Naive thymus-derived CD4-positive, alpha-beta T cell (primary cell): ENCODE measurements at regions of chr16 and their contacts with region 1.

Region 1: GRCh38 chr16:138049-138417 is 440 bp downstream of the NPRL3 start:
- DNase-seq: peak in 7 of 9 donors; percentile 10 to 55 (median 23)
- ATAC-seq: peak; percentile 24
- H3K4me3 ChIP-seq: peak overlapping the region; percentile 58
- H3K4me3 Mint-ChIP-seq: peak overlapping the region; percentile 74 to 90 (median 84)
- H3K27ac ChIP-seq: peak overlapping the region; percentile 68
- H3K27ac Mint-ChIP-seq: peak overlapping the region in 7 of 9 donors; percentile 11 to 94 (median 75)
- H3K4me1 ChIP-seq: peaks cover 6% of the 10 kb centered on the region in 2 donors
- H3K4me1 Mint-ChIP-seq: peaks cover 9 to 47% (median 26%) of the 10 kb centered on the region in 7 donors
- H3K27me3 ChIP-seq: no peaks in the 10 kb centered on the region
- H3K27me3 Mint-ChIP-seq: peaks cover 0 to 6% (median 0%) of the 10 kb centered on the region in 5 donors

Region 2: GRCh38 chr16:53346-54236 is 84.4 kb before region 1 on chr16 and contains the starts of genes POLR3K and SNRNP25:
- CTCF ChIA-PET with region 1: no interaction called
- POLR2A ChIA-PET with region 1: no interaction called
- intact Hi-C with region 1: loop called in 1 of 2 experiments (anchors 1 kb)
- DNase-seq: peak; percentile 90 to 98 (median 96)
- ATAC-seq: peak; percentile 98
- H3K4me3 ChIP-seq: peak within 1 kb of the TSS; percentile 96
- H3K4me3 Mint-ChIP-seq: peak within 1 kb of the TSS; percentile 89 to 100 (median 98)
- H3K27ac ChIP-seq: peak within 1 kb of the TSS; percentile 73
- H3K27ac Mint-ChIP-seq: peak within 1 kb of the TSS; percentile 66 to 95 (median 92)
- H3K4me1 ChIP-seq: peaks cover 9 to 11% of the 10 kb centered on the region in 2 donors
- H3K4me1 Mint-ChIP-seq: peaks cover 22 to 45% (median 36%) of the 10 kb centered on the region in 7 donors
- H3K27me3 ChIP-seq: no peaks in the 10 kb centered on the region
- H3K27me3 Mint-ChIP-seq: no peaks in the 10 kb centered on the region
- total RNA-seq, gene POLR3K: 8.5 to 45.4 (median 18.9) TPM
- total RNA-seq, gene SNRNP25: 9.8 to 57.4 (median 11.7) TPM

Region 3: GRCh38 chr16:200388-200787 is 62.4 kb after region 1 on chr16:
- CTCF ChIA-PET with region 1: no interaction called
- POLR2A ChIA-PET with region 1: no interaction called
- intact Hi-C with region 1: no loop called
- DNase-seq: no peak
- ATAC-seq: no peak
- H3K4me3 ChIP-seq: no peak overlapping the region
- H3K4me3 Mint-ChIP-seq: no peak overlapping the region
- H3K27ac ChIP-seq: no peak overlapping the region
- H3K27ac Mint-ChIP-seq: no peak overlapping the region
- H3K4me1 ChIP-seq: no peaks in the 10 kb centered on the region
- H3K4me1 Mint-ChIP-seq: no peaks in the 10 kb centered on the region
- H3K27me3 ChIP-seq: no peaks in the 10 kb centered on the region
- H3K27me3 Mint-ChIP-seq: no peaks in the 10 kb centered on the region

Region 4: DNA sequence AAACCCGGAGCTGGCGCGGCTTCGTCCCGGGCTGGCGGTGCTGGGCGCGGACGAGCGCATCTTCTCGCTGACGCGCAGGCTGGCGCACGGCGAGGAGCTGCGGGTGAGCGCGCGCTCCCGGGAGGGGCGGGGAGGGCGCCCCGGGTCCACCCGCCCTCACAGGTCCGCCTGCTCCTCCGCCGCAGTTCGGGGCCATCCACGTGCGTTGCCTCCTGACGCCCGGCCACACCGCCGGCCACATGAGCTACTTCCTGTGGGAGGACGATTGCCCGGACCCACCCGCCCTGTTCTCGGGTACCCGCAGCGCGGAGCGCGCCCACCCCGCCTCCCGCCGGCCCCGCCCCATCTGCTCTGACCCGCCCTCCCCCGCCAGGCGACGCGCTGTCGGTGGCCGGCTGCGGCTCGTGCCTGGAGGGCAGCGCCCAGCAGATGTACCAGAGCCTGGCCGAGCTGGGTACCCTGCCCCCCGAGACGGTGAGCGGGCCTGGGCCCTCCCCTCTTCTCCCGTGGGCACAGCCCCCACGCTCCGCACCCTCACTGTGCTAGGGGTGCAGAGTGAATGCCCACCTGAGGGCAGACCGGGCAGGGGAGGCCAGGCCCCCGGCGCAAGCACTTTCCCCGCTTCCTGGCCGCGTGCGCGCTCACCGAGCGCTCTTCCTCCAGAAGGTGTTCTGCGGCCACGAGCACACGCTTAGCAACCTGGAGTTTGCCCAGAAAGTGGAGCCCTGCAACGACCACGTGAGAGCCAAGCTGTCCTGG is 590.3 kb after region 1 on chr16:
- CTCF ChIA-PET with region 1: no interaction called
- POLR2A ChIA-PET with region 1: no interaction called
- intact Hi-C with region 1: loop called in 1 of 2 experiments (anchors 5 kb)
- DNase-seq: peak in 7 of 9 donors; percentile 46 to 64 (median 55)
- ATAC-seq: peak; percentile 85
- H3K4me3 ChIP-seq: peak overlapping the region; percentile 39
- H3K4me3 Mint-ChIP-seq: peak overlapping the region in 5 of 10 donors; percentile 25 to 87 (median 42)
- H3K27ac ChIP-seq: peak overlapping the region; percentile 21
- H3K27ac Mint-ChIP-seq: no peak overlapping the region
- H3K4me1 ChIP-seq: peaks cover 0 to 12% of the 10 kb centered on the region in 2 donors
- H3K4me1 Mint-ChIP-seq: no peaks in the 10 kb centered on the region
- H3K27me3 ChIP-seq: no peaks in the 10 kb centered on the region
- H3K27me3 Mint-ChIP-seq: peaks cover 0 to 6% (median 0%) of the 10 kb centered on the region in 5 donors